Psoas muscle (tissue), 8 donors: ENCODE measurements at regions of chr7 and their contacts with region 1.

Region 1: GRCh38 chr7:2157468-2158279 is 75.1 kb downstream of the MAD1L1 start:
- DNase-seq: peak; percentile 52 to 56
- ATAC-seq: peak; percentile 81 to 92 (median 86)
- H3K4me3 ChIP-seq: no peak overlapping the region
- H3K27ac ChIP-seq: peak overlapping the region; percentile 78
- H3K4me1 ChIP-seq: peaks cover 27% of the 10 kb centered on the region
- H3K27me3 ChIP-seq: no peaks in the 10 kb centered on the region
- CTCF ChIP-seq: no peak

Region 2: DNA sequence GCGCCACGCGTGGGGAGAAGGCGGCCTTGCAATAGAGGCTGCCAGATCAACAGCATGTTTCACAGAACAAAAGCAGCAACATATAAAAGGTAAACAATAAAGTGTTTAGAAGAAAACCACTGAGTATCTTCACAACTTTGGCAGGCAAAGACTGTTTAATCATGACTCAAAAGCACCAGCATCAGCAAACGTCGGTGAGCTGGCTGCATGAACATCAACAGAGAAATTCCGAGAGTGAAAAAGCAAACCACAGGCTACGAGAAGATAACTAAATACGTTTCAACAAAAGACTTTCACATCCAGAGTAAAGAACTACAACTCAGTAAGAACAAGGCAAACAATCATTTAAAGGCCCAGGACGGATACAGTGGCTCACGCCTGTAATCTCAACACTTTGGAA is 97.0 kb before region 1 on chr7:
- intact Hi-C with region 1: no loop called
- DNase-seq: no peak
- ATAC-seq: no peak
- H3K4me3 ChIP-seq: no peak overlapping the region
- H3K27ac ChIP-seq: no peak overlapping the region
- H3K4me1 ChIP-seq: peaks cover 2% of the 10 kb centered on the region
- H3K27me3 ChIP-seq: no peaks in the 10 kb centered on the region
- CTCF ChIP-seq: no peak

Region 3: DNA sequence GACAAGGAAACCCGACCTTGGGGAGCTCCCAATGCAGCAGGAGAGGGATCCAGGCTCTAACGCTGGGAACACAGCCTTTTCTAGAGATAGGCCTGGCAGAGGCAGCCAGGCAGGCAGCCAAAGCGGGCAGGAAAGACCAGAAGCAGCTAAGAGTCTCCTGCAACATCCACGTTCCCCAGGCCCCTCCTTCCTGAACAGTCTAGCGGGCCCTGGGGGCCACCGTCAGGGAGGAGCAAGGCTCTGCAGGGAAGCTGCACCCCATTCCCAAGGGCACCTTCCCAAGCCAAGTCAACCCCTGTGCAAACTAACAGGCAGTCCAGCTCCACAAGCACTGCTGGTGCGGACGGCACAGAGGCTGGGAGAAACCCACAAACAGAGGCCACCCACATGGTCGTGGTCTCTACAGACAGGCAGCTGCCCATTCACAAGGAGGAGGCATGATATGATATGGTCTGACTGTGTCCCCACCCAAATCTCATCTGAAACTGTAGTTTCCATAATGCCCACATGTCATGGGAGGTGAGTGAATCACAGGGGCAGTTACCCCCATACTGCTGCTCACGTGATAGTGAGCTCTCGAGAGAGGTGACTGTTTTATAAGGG is 40.6 kb before region 1 on chr7:
- intact Hi-C with region 1: loop called in 1 of 2 experiments (anchors 5 kb)
- DNase-seq: peak in 1 of 2 donors; percentile 49
- ATAC-seq: peak; percentile 13 to 67 (median 44)
- H3K4me3 ChIP-seq: no peak overlapping the region
- H3K27ac ChIP-seq: peak overlapping the region; percentile 79
- H3K4me1 ChIP-seq: peaks cover 27% of the 10 kb centered on the region
- H3K27me3 ChIP-seq: no peaks in the 10 kb centered on the region
- CTCF ChIP-seq: no peak